K562 (cell line): ENCODE measurements at regions of chr1 and their contacts with region 1.

Region 1: GRCh38 chr1:201895913-201896807 is 7.5 kb downstream of the SHISA4 start:
- DNase-seq: peak; percentile 93 to 98 (median 96)
- ATAC-seq: peak; percentile 98
- H3K4me3 ChIP-seq: no peak overlapping the region
- H3K27ac ChIP-seq: no peak overlapping the region; the same call in 2 of the 3 replicates
- H3K4me1 ChIP-seq: peaks cover 3 to 8% of the 10 kb centered on the region in 2 experiments; a peak in 2 of 5 replicates
- H3K27me3 ChIP-seq: peaks cover 0 to 21% of the 10 kb centered on the region in 2 experiments; a peak in 3 of 5 replicates
- CTCF ChIP-seq: peak; percentile 98 to 99 (median 99)
- EP300 ChIP-seq: peak; percentile 53
- POLR2A ChIP-seq: no peak
- RAD21 ChIP-seq: peak; percentile 99 to 100

Region 2: DNA sequence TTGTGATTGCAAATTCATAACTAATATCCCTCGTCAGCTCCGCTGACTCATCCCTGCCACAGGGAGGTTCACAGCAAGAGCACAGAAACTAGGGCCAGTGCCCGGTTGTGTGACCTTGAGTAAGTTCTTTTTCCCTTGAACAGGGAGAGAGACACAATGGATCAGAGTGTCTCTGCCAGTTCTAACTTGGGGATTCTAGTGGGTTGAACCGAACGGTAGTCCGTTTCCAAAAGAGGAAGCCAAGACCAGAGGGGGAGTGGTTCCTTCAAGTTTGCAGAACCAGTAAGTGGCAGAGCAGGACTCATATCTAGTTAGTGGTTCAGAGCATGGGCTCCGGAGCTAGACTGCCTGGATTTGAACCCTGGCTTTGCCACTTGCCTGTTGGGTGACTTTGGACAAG is 12.4 kb before region 1 on chr1:
- CTCF ChIA-PET with region 1: interaction called, 5 read pairs
- POLR2A ChIA-PET with region 1: interaction called, 13 read pairs
- in situ Hi-C with region 1: no loop called
- intact Hi-C with region 1: no loop called
- DNase-seq: peak; percentile 42 to 69 (median 52)
- ATAC-seq: peak; percentile 47
- H3K4me3 ChIP-seq: no peak overlapping the region
- H3K27ac ChIP-seq: peak overlapping the region; percentile 43; the same call in 2 of the 3 replicates
- H3K4me1 ChIP-seq: peaks cover 41 to 55% of the 10 kb centered on the region in 2 experiments
- H3K27me3 ChIP-seq: no peaks in the 10 kb centered on the region
- CTCF ChIP-seq: no peak
- EP300 ChIP-seq: no peak
- POLR2A ChIP-seq: no peak
- RAD21 ChIP-seq: no peak

Region 3: GRCh38 chr1:201946224-201946908 is 50.2 kb after region 1 on chr1 and contains the start of gene LMOD1:
- CTCF ChIA-PET with region 1: no interaction called
- POLR2A ChIA-PET with region 1: interaction called, 4 read pairs
- in situ Hi-C with region 1: no loop called
- intact Hi-C with region 1: loop called (anchors 2 kb)
- DNase-seq: peak; percentile 63 to 89 (median 77)
- ATAC-seq: peak; percentile 84
- H3K4me3 ChIP-seq: peak within 1 kb of the TSS; percentile 12
- H3K27ac ChIP-seq: no peak within 1 kb of the TSS; the same call in 2 of the 3 replicates
- H3K4me1 ChIP-seq: peaks cover 27 to 36% of the 10 kb centered on the region in 2 experiments
- H3K27me3 ChIP-seq: no peaks in the 10 kb centered on the region
- CTCF ChIP-seq: no peak
- EP300 ChIP-seq: no peak
- POLR2A ChIP-seq: peak; percentile 37; the same call in 1 of the 2 replicates
- RAD21 ChIP-seq: 0 out of 4 replicates have a peak, but pooled peaks of 1 of the 2 experiments have one; percentile 3
- polyA plus RNA-seq, gene LMOD1: 0.03 TPM in 1 of 2 experiments, not detected in the other

Region 4: DNA sequence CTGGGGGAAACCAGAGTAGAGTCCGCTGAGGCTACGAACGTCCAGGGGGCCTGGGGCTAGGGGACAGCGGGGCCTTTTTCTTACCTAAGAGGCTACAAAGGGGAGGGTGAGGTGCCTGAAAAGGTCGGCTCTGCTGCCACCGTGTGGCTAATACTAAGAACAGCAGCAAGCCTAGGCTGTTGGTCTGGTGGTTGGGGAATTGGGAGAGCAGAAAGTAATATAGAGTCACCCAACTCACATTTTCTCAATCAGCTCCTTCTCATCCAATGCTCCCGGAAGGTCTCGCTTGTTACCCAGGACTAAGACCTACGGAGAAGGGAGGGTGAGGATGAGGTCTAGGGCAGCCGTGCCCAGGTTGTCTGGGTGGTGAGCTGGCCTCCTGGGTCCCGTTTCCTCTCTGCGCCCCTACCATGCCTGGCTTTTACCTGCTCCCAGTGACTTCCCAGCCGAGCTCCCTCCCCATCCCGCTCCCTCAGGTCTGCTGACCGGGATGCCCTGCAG is 239.1 kb after region 1 on chr1:
- CTCF ChIA-PET with region 1: no interaction called
- POLR2A ChIA-PET with region 1: interaction called, 4 read pairs
- in situ Hi-C with region 1: no loop called
- intact Hi-C with region 1: loop called (anchors 1 kb)
- DNase-seq: peak; percentile 84 to 92 (median 90)
- ATAC-seq: peak; percentile 95
- H3K4me3 ChIP-seq: no peak overlapping the region
- H3K27ac ChIP-seq: no peak overlapping the region
- H3K4me1 ChIP-seq: peaks cover 0 to 17% of the 10 kb centered on the region in 2 experiments; a peak in 2 of 5 replicates
- H3K27me3 ChIP-seq: no peaks in the 10 kb centered on the region
- CTCF ChIP-seq: peak; percentile 83 to 95 (median 86)
- EP300 ChIP-seq: no peak
- POLR2A ChIP-seq: no peak
- RAD21 ChIP-seq: peak; percentile 65 to 70

Region 5: DNA sequence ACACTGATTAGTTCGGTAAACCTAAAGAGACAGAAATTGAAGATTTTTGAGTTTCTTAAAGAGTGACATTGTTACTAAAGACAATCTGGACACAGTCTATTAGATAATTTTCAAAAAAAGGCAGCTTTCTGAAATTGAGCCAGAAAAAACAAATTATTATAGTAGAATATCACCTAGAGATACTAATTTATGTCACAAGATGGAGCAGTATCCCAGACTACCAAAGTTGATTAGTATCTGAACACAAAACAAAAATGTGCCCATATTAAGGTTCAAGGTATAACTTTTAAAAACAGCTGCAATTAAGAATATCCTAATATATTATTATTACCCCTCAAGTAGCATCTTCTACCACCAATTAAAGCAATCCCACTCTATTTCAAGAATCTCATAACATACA is 854.6 kb after region 1 on chr1:
- CTCF ChIA-PET with region 1: no interaction called
- POLR2A ChIA-PET with region 1: no interaction called
- in situ Hi-C with region 1: no loop called
- intact Hi-C with region 1: no loop called
- DNase-seq: no peak
- ATAC-seq: no peak
- H3K4me3 ChIP-seq: no peak overlapping the region
- H3K27ac ChIP-seq: no peak overlapping the region
- H3K4me1 ChIP-seq: no peaks in the 10 kb centered on the region
- H3K27me3 ChIP-seq: no peaks in the 10 kb centered on the region
- CTCF ChIP-seq: peak in 1 of 3 experiments; percentile 34; a peak in 2 of 6 replicates
- EP300 ChIP-seq: no peak
- POLR2A ChIP-seq: no peak
- RAD21 ChIP-seq: peak; percentile 9 to 38; a peak in 2 of 4 replicates